Activated CD4-positive, alpha-beta T cell treated with anti-CD3 and anti-CD28 coated beads for 36 hours (primary cell): ENCODE measurements at regions of chr9 and their contacts with region 1.

Region 1: GRCh38 chr9:137150617-137151457 is 11.9 kb downstream of the GRIN1 start:
- DNase-seq: peak; percentile 90
- ATAC-seq: peak; percentile 80
- H3K4me3 Mint-ChIP-seq: no peak overlapping the region
- H3K27ac Mint-ChIP-seq: no peak overlapping the region
- H3K4me1 Mint-ChIP-seq: peaks cover 8% of the 10 kb centered on the region
- H3K27me3 Mint-ChIP-seq: peaks cover 8% of the 10 kb centered on the region

Region 2: DNA sequence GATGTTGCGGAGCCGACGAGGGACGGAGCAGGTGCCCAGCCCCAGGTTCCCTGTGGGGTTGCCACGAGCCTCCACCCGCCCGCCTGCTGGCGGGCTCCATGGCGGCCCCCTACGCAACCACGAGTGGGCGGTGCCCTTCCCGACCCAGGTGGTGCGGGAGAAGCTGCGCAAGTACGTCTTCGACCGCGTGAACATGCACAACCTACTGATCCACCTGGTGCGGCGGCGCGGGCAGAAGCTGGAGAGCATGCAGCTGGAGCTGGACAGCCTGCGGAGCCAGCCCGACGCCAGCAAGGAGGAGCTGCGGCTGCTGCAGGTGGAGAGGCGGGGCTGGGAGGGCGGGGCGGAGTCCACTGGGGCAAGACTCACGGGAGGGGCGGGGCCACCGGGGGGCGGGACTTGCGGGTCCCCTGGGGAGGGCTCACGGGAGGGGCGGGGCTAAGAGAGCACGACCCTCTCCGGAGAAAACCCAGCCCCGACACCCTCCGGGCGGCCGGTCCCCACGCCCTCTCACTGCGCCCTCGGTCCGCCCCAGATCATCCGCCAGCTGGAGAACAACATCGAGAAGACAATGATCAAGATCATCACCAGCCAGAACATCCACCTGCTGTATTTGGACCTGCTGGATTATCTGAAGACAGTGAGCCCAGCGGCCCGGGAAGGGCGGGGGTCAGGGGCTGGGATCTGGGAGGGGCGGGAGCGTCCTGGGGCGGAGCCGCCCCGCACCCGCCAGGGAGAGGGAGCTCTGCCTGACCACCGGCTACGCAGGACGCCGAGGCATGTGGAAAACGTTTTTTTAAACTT is 350.8 kb before region 1 on chr9:
- CTCF ChIA-PET with region 1: no interaction called
- POLR2A ChIA-PET with region 1: no interaction called
- intact Hi-C with region 1: loop called in 1 of 2 experiments (anchors 1 kb)
- DNase-seq: peak; percentile 95
- ATAC-seq: peak; percentile 79
- H3K4me3 Mint-ChIP-seq: peak overlapping the region; percentile 72
- H3K27ac Mint-ChIP-seq: no peak overlapping the region
- H3K4me1 Mint-ChIP-seq: peaks cover 21% of the 10 kb centered on the region
- H3K27me3 Mint-ChIP-seq: peaks cover 4% of the 10 kb centered on the region

Region 3: GRCh38 chr9:137021979-137022619 is 128.7 kb before region 1 on chr9:
- CTCF ChIA-PET with region 1: no interaction called
- POLR2A ChIA-PET with region 1: no interaction called
- intact Hi-C with region 1: loop called in 1 of 2 experiments (anchors 1 kb)
- DNase-seq: peak; percentile 93
- ATAC-seq: peak; percentile 97
- H3K4me3 Mint-ChIP-seq: no peak overlapping the region
- H3K27ac Mint-ChIP-seq: no peak overlapping the region
- H3K4me1 Mint-ChIP-seq: peaks cover 3% of the 10 kb centered on the region
- H3K27me3 Mint-ChIP-seq: no peaks in the 10 kb centered on the region

Region 4: GRCh38 chr9:137200311-137201204 is 49.7 kb after region 1 on chr9 and contains the start of gene TPRN:
- CTCF ChIA-PET with region 1: interaction called, 3 read pairs
- POLR2A ChIA-PET with region 1: no interaction called
- intact Hi-C with region 1: loop called in 1 of 2 experiments (anchors 1 kb)
- DNase-seq: peak; percentile 99
- ATAC-seq: peak; percentile 99
- H3K4me3 Mint-ChIP-seq: peak within 1 kb of the TSS; percentile 79
- H3K27ac Mint-ChIP-seq: peak within 1 kb of the TSS; percentile 76
- H3K4me1 Mint-ChIP-seq: peaks cover 29% of the 10 kb centered on the region
- H3K27me3 Mint-ChIP-seq: no peaks in the 10 kb centered on the region
- total RNA-seq, gene TPRN: 5.6 to 5.8 TPM

Region 5: GRCh38 chr9:137459147-137459600 is 308.3 kb after region 1 on chr9 and contains the start of gene NSMF:
- CTCF ChIA-PET with region 1: no interaction called
- POLR2A ChIA-PET with region 1: no interaction called
- intact Hi-C with region 1: loop called in 1 of 2 experiments (anchors 1 kb)
- DNase-seq: peak; percentile 98
- ATAC-seq: peak; percentile 66
- H3K4me3 Mint-ChIP-seq: peak within 1 kb of the TSS; percentile 39
- H3K27ac Mint-ChIP-seq: peak within 1 kb of the TSS; percentile 78
- H3K4me1 Mint-ChIP-seq: peaks cover 33% of the 10 kb centered on the region
- H3K27me3 Mint-ChIP-seq: no peaks in the 10 kb centered on the region
- total RNA-seq, gene NSMF: 63.6 to 65.0 TPM